Gastrocnemius medialis (tissue), 4 donors: ENCODE measurements at regions of chr9 and their contacts with region 1.

Region 1: GRCh38 chr9:4640027-4640426 is 22.1 kb upstream of the PLPP6 start:
- DNase-seq: no peak
- ATAC-seq: no peak
- H3K4me3 ChIP-seq: no peak overlapping the region
- H3K27ac ChIP-seq: no peak overlapping the region
- H3K4me1 ChIP-seq: no peaks in the 10 kb centered on the region
- H3K27me3 ChIP-seq: no peaks in the 10 kb centered on the region
- CTCF ChIP-seq: peak; percentile 22 to 55 (median 46)
- POLR2A ChIP-seq: no peak

Region 2: DNA sequence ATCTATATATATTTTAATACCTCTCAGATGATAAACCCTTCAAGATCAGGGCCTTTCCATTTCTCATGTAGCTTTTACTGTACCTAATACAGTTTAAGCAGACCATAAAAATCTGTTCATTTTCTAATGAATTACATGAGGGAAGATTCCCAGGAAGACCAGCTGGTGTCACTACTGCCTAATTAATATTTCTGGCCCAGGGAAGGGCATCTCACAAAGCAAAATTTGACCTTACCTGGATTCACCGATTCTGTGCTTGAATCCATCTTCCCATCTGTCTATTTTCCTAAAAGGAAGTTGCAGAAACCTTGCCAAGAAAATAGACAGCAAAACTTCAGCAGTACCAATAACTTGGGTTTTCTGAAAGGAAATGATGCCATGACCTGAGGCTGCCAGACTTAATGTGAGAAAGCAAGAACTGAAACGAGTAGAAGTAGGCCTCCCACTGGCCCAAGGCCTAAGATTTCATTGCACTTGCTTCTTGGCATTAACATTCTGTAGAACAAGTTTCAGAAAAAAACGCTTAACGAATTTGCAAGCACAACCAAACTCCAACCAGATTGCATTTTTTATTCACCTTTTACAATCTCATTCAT is 257.2 kb before region 1 on chr9:
- in situ Hi-C with region 1: loop called in 3 of 4 experiments (anchors 5 to 25 kb)
- intact Hi-C with region 1: loop called (anchors 1 kb)
- DNase-seq: no peak
- ATAC-seq: no peak
- H3K4me3 ChIP-seq: no peak overlapping the region
- H3K27ac ChIP-seq: no peak overlapping the region
- H3K4me1 ChIP-seq: peaks cover 0 to 4% of the 10 kb centered on the region in 2 donors
- H3K27me3 ChIP-seq: no peaks in the 10 kb centered on the region
- CTCF ChIP-seq: peak in 4 of 5 experiments; percentile 16 to 54 (median 50)
- POLR2A ChIP-seq: no peak

Region 3: DNA sequence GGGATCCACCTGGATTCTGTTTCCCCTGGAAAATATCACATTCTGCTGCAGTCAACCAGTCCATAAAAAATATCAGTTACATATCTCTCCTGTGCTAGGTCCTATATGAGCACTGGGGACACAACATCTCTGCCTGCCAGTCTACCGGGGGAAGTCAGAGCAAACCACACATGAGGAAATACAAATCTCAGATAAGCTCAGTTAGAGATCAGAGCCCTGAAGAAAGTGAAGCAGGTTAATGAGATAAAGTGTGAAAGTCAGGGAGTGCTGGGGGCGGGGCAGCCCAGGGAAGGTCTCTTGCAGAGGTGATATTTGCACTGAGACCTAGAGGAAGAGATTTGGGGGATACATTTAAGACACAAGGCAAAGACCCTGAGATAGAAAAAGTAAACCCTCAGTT is 217.5 kb before region 1 on chr9:
- in situ Hi-C with region 1: no loop called
- intact Hi-C with region 1: no loop called
- DNase-seq: no peak
- ATAC-seq: no peak
- H3K4me3 ChIP-seq: no peak overlapping the region
- H3K27ac ChIP-seq: no peak overlapping the region
- H3K4me1 ChIP-seq: no peaks in the 10 kb centered on the region
- H3K27me3 ChIP-seq: no peaks in the 10 kb centered on the region
- CTCF ChIP-seq: no peak
- POLR2A ChIP-seq: no peak